Mammary epithelial cell (primary cell): ENCODE measurements at regions of chrX and their contacts with region 1.

Region 1: DNA sequence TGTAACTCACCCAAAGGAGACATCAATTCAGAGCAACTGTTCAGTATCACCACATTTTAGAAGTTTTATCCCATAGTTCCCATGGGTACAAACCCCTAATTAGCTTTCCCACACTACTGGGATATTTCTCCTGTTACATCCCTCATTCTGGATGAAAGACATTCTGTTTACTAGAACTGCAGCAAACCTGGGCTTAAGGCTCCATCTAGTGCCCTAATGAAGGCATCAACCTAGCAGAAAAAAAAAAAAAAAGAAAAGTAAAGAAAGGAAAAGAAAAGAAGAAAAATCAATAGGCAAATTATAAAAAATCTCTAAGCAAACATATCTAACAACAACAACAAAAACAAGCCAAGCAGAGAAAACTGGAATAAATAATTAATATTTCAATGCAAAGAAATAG is 133.7 kb upstream of the CPXCR1 start:
- DNase-seq: no peak
- H3K4me3 ChIP-seq: no peak overlapping the region
- H3K27ac ChIP-seq: no peak overlapping the region
- H3K4me1 ChIP-seq: no peaks in the 10 kb centered on the region
- H3K27me3 ChIP-seq: no peaks in the 10 kb centered on the region
- CTCF ChIP-seq: peak; percentile 34 to 52

Region 2: DNA sequence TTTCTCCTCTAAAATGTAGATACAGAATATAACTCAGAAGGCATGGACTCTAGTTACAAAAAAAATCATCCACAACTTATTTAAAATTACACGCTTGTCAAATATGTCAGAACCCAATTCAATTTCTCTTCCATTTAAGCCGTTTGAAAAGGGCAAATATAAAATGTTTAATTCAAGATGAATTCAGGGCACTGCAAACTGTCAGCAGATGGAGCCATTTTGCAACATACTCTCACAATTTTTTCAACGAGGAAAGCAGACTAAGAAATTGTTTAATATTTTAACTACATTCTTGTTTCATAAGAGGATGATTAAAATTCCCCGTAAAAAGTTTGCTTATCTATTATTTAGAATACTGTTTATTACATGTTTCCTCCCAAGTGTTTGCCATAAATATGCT is 187.6 kb before region 1 on chrX:
- CTCF ChIA-PET with region 1: no interaction called
- dilution Hi-C with region 1: no loop called
- in situ Hi-C with region 1: no loop called
- intact Hi-C with region 1: loop called (anchors 5 kb)
- DNase-seq: no peak
- H3K4me3 ChIP-seq: no peak overlapping the region
- H3K27ac ChIP-seq: no peak overlapping the region
- H3K4me1 ChIP-seq: no peaks in the 10 kb centered on the region
- H3K27me3 ChIP-seq: no peaks in the 10 kb centered on the region
- CTCF ChIP-seq: peak in 1 of 2 donors; percentile 38

Region 3: DNA sequence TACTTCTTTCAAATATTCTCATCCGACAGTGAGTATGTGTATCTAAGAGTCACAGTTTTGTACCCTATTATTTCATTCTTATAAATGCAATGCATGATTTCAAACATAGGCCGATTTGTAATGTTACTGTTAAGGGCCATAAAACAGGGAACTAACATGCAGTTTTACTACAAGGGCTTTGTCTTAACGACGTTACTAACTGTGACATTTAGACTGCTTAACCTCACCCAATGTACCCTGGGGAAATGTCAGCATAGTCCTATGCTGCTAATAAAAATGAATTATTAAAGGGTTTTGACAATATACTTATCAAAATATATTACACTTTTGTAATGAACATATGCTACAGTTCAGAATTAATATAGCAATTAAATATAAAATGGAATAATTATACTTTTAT is 58.9 kb after region 1 on chrX:
- CTCF ChIA-PET with region 1: no interaction called
- dilution Hi-C with region 1: no loop called
- in situ Hi-C with region 1: no loop called
- intact Hi-C with region 1: no loop called
- DNase-seq: no peak
- H3K4me3 ChIP-seq: no peak overlapping the region
- H3K27ac ChIP-seq: no peak overlapping the region
- H3K4me1 ChIP-seq: no peaks in the 10 kb centered on the region
- H3K27me3 ChIP-seq: no peaks in the 10 kb centered on the region
- CTCF ChIP-seq: no peak